ENCODE measurements at regions of chr5 and their contacts with region 1.

Region 1: GRCh38 chr5:39187831-39188731 is 31.3 kb downstream of the FYB1 start:
- DNase-seq: peak; percentile 76
- H3K4me3 Mint-ChIP-seq: peak overlapping the region; percentile 78
- H3K27ac Mint-ChIP-seq: peak overlapping the region; percentile 97
- H3K4me1 Mint-ChIP-seq: peaks cover 81% of the 10 kb centered on the region
- H3K27me3 Mint-ChIP-seq: no peaks in the 10 kb centered on the region

Region 2: GRCh38 chr5:38576442-38576841 is 611.6 kb before region 1 on chr5:
- intact Hi-C with region 1: no loop called
- DNase-seq: no peak
- H3K4me3 Mint-ChIP-seq: no peak overlapping the region
- H3K27ac Mint-ChIP-seq: no peak overlapping the region
- H3K4me1 Mint-ChIP-seq: no peaks in the 10 kb centered on the region
- H3K27me3 Mint-ChIP-seq: peaks cover 18% of the 10 kb centered on the region

Region 3: DNA sequence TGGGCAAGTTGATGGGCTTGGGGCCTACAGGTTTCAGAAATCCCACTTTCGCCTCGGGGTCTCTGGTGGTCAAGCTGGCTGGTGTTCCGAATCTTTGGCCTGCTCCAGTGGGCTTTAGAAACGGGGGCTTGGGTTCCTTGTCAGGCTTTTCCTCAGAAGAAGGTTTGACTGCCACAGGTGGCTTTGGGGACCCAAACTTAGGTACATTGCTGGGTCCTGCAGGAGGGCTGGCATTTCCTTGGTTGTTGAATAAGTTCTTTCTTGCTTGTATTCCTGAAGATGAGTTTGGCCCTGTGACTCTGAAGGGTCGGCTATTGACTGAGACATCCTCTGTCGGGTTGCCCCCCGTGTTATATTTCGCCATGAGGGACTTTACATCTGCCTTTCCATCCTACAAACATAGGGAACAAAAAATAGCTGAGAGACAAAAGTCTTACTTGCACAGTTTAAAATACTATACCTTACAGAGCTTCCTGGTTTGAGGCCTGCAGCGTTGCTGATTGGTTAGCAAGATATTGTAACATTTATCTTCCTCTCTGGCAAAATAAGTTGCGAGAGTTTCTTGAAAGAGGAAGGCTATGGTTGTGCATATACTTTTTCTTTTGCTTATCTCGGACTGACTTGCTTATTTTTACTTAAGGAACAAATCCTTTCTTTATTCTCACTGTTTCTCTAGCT is 14.7 kb after region 1 on chr5:
- intact Hi-C with region 1: loop called (anchors 1 kb)
- DNase-seq: peak; percentile 83
- H3K4me3 Mint-ChIP-seq: peak overlapping the region; percentile 90
- H3K27ac Mint-ChIP-seq: peak overlapping the region; percentile 90
- H3K4me1 Mint-ChIP-seq: peaks cover 47% of the 10 kb centered on the region
- H3K27me3 Mint-ChIP-seq: no peaks in the 10 kb centered on the region

Region 4: GRCh38 chr5:39274398-39275085 is 86.5 kb after region 1 on chr5:
- intact Hi-C with region 1: no loop called
- DNase-seq: peak; percentile 71
- H3K4me3 Mint-ChIP-seq: peak overlapping the region; percentile 80
- H3K27ac Mint-ChIP-seq: peak overlapping the region; percentile 93
- H3K4me1 Mint-ChIP-seq: peaks cover 26% of the 10 kb centered on the region
- H3K27me3 Mint-ChIP-seq: no peaks in the 10 kb centered on the region